Sciatic nerve (tissue), 2 donors: ENCODE measurements at regions of chr19 and their contacts with region 1.

Region 1: GRCh38 chr19:54902061-54902460 is 3.9 kb upstream of the NCR1 start:
- DNase-seq: peak; percentile 1
- ATAC-seq: no peak

Region 2: DNA sequence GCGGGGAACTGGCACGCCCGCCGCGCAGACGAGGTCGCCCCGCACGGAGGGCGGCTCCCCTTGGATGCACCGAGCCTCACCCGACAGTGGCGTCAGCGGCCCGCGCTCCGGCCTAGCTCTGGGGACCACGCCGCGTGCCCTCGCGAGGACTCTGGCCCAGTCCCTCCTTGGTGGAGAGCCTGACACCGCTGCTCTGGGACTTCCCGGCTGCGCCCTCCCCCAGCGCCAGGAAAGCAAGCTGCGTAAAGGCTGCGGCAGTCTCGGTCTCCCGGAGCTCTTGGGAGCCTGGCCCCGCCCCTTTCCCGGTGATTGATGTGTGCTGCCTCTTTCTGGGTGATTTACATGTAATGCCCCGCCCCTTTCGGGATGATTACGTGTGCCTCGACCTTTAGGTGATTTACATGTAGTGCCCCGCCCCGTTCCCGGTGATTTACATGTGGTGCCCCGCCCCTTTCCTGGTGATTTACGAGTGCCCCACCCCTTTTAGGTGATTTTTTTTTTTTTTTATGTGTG is 438.5 kb before region 1 on chr19 and contains the start of gene LENG9:
- intact Hi-C with region 1: loop called (anchors 5 kb)
- DNase-seq: peak; percentile 99
- ATAC-seq: peak; percentile 91
- total RNA-seq, gene LENG9: 6.0 TPM

Region 3: GRCh38 chr19:54882758-54883157 is 19.3 kb before region 1 on chr19:
- intact Hi-C with region 1: no loop called
- DNase-seq: no peak
- ATAC-seq: no peak